Breast epithelium (tissue), 4 donors: ENCODE measurements at regions of chr20 and their contacts with region 1.

Region 1: GRCh38 chr20:3255728-3256127 is 16.7 kb upstream of the SLC4A11 start:
- DNase-seq: no peak
- H3K4me3 ChIP-seq: no peak overlapping the region
- H3K27ac ChIP-seq: no peak overlapping the region
- H3K4me1 ChIP-seq: no peaks in the 10 kb centered on the region
- H3K27me3 ChIP-seq: no peaks in the 10 kb centered on the region
- CTCF ChIP-seq: no peak
- POLR2A ChIP-seq: no peak

Region 2: GRCh38 chr20:1555952-1556351 is 1699.8 kb before region 1 on chr20:
- intact Hi-C with region 1: no loop called
- DNase-seq: no peak
- H3K4me3 ChIP-seq: no peak overlapping the region
- H3K27ac ChIP-seq: no peak overlapping the region
- H3K4me1 ChIP-seq: no peaks in the 10 kb centered on the region
- H3K27me3 ChIP-seq: no peaks in the 10 kb centered on the region
- CTCF ChIP-seq: no peak
- POLR2A ChIP-seq: no peak

Region 3: DNA sequence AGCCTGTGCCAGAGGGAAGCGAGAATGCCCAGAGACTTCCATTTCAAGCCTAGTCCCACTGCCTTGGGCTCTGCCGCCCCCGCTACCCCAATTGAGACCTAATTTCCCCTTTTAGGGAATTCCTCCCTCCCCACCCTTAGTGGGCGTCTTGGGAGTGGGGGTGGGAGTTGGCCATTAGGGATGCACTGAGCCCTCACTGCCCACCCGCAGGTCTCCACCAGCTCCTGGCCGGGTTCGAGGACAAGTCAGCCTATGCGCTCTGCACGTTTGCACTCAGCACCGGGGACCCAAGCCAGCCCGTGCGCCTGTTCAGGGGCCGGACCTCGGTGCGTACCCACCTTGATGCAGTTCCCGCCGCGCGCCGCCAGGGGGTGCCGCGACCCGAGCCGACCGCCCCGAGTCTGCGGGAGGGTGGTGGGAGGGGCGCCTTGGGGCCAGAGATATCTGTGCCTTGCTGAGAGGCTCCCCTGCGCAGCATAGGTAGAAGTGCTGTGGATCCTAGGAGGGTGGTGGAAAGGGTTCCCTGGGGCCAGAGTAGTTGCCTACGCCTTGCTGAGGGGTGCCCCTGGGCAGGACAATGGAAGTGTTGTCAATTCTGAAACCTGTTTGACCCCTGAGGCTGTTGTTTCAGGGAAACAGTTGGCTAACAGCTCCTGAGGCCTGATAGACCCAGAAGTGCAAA is 37.3 kb before region 1 on chr20:
- intact Hi-C with region 1: no loop called
- DNase-seq: peak; percentile 35 to 66
- H3K4me3 ChIP-seq: peak overlapping the region in 1 of 3 donors; percentile 45
- H3K27ac ChIP-seq: peak overlapping the region; percentile 12 to 62
- H3K4me1 ChIP-seq: peaks cover 0 to 4% of the 10 kb centered on the region in 2 donors
- H3K27me3 ChIP-seq: no peaks in the 10 kb centered on the region
- CTCF ChIP-seq: peak; percentile 86 to 90 (median 87)
- POLR2A ChIP-seq: no peak

Region 4: GRCh38 chr20:3239867-3240775 is 15.6 kb before region 1 on chr20:
- intact Hi-C with region 1: loop called (anchors 1 kb)
- DNase-seq: no peak
- H3K4me3 ChIP-seq: peak overlapping the region; percentile 62 to 96 (median 81)
- H3K27ac ChIP-seq: peak overlapping the region; percentile 8 to 48
- H3K4me1 ChIP-seq: peaks cover 0 to 4% of the 10 kb centered on the region in 2 donors
- H3K27me3 ChIP-seq: peaks cover 4 to 10% of the 10 kb centered on the region in 2 donors
- CTCF ChIP-seq: no peak
- POLR2A ChIP-seq: no peak

Region 5: GRCh38 chr20:4512891-4513550 is 1257.3 kb after region 1 on chr20:
- intact Hi-C with region 1: no loop called
- DNase-seq: no peak
- H3K4me3 ChIP-seq: no peak overlapping the region
- H3K27ac ChIP-seq: no peak overlapping the region
- H3K4me1 ChIP-seq: no peaks in the 10 kb centered on the region
- H3K27me3 ChIP-seq: no peaks in the 10 kb centered on the region
- CTCF ChIP-seq: no peak
- POLR2A ChIP-seq: no peak